ENCODE measurements at regions of chr2 and their contacts with region 1.

Region 1: DNA sequence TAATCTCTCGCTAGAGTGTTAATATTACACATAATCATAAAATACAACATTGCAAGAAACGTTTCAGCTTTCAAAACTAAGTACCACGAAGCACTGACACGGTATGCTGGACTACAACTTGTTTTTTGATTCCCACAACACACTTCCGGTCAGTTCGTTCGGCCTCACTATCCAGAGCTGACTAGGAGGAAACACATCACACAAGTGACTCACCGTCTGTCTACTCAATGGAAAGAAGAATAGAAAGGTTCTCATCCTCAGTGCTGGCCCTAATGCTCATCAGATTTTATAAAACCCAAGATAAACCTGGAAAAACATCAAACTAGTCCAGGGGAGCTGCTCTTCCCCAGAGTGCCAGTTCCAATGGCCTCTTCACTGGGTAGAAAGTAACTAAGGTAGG is 42.9 kb downstream of the ZNF385B start:
- DNase-seq: no peak
- H3K4me3 Mint-ChIP-seq: no peak overlapping the region
- H3K27ac Mint-ChIP-seq: no peak overlapping the region
- H3K4me1 Mint-ChIP-seq: no peaks in the 10 kb centered on the region
- H3K27me3 Mint-ChIP-seq: peaks cover 1% of the 10 kb centered on the region

Region 2: GRCh38 chr2:179787601-179788000 is 30.9 kb before region 1 on chr2:
- CTCF ChIA-PET with region 1: no interaction called
- POLR2A ChIA-PET with region 1: no interaction called
- intact Hi-C with region 1: loop called (anchors 1 kb)
- DNase-seq: no peak
- H3K4me3 Mint-ChIP-seq: no peak overlapping the region
- H3K27ac Mint-ChIP-seq: no peak overlapping the region
- H3K4me1 Mint-ChIP-seq: no peaks in the 10 kb centered on the region
- H3K27me3 Mint-ChIP-seq: no peaks in the 10 kb centered on the region

Region 3: GRCh38 chr2:179974743-179975142 is 156.2 kb after region 1 on chr2:
- CTCF ChIA-PET with region 1: no interaction called
- POLR2A ChIA-PET with region 1: no interaction called
- intact Hi-C with region 1: no loop called
- DNase-seq: no peak
- H3K4me3 Mint-ChIP-seq: no peak overlapping the region
- H3K27ac Mint-ChIP-seq: no peak overlapping the region
- H3K4me1 Mint-ChIP-seq: no peaks in the 10 kb centered on the region
- H3K27me3 Mint-ChIP-seq: no peaks in the 10 kb centered on the region

Measured in activated CD4-positive, alpha-beta memory T cell treated with anti-CD3 and anti-CD28 coated beads for 36 hours (primary cell).